ENCODE measurements at regions of chr14 and their contacts with region 1.

Region 1: GRCh38 chr14:102774391-102775153 is 2.7 kb upstream of the TRAF3 start:
- DNase-seq: peak; percentile 25 to 87
- ATAC-seq: peak in 1 of 3 donors; percentile 19
- H3K4me3 ChIP-seq: no peak overlapping the region
- H3K4me3 Mint-ChIP-seq: no peak overlapping the region
- H3K27ac ChIP-seq: peak overlapping the region; percentile 92
- H3K27ac Mint-ChIP-seq: peak overlapping the region; percentile 23 to 78
- H3K4me1 ChIP-seq: peaks cover 29% of the 10 kb centered on the region
- H3K4me1 Mint-ChIP-seq: peaks cover 15 to 27% of the 10 kb centered on the region in 2 donors
- H3K27me3 ChIP-seq: no peaks in the 10 kb centered on the region
- H3K27me3 Mint-ChIP-seq: peaks cover 0 to 2% of the 10 kb centered on the region in 2 donors
- CTCF ChIP-seq: peak; percentile 67

Region 2: GRCh38 chr14:102795060-102795925 is 20.7 kb after region 1 on chr14:
- intact Hi-C with region 1: loop called (anchors 2 kb)
- DNase-seq: peak in 1 of 2 donors; percentile 67
- ATAC-seq: peak; percentile 89 to 95 (median 91)
- H3K4me3 ChIP-seq: no peak overlapping the region
- H3K4me3 Mint-ChIP-seq: no peak overlapping the region
- H3K27ac ChIP-seq: no peak overlapping the region
- H3K27ac Mint-ChIP-seq: peak overlapping the region; percentile 76 to 82
- H3K4me1 ChIP-seq: peaks cover 13% of the 10 kb centered on the region
- H3K4me1 Mint-ChIP-seq: peaks cover 30 to 38% of the 10 kb centered on the region in 2 donors
- H3K27me3 ChIP-seq: no peaks in the 10 kb centered on the region
- H3K27me3 Mint-ChIP-seq: no peaks in the 10 kb centered on the region
- CTCF ChIP-seq: no peak

Region 3: GRCh38 chr14:102819747-102820330 is 45.3 kb after region 1 on chr14:
- intact Hi-C with region 1: loop called (anchors 5 kb)
- DNase-seq: peak in 1 of 2 donors; percentile 37
- ATAC-seq: peak; percentile 12 to 35 (median 14)
- H3K4me3 ChIP-seq: no peak overlapping the region
- H3K4me3 Mint-ChIP-seq: peak overlapping the region; percentile 47
- H3K27ac ChIP-seq: no peak overlapping the region
- H3K27ac Mint-ChIP-seq: peak overlapping the region; percentile 69 to 76
- H3K4me1 ChIP-seq: peaks cover 16% of the 10 kb centered on the region
- H3K4me1 Mint-ChIP-seq: peaks cover 47 to 48% of the 10 kb centered on the region in 2 donors
- H3K27me3 ChIP-seq: no peaks in the 10 kb centered on the region
- H3K27me3 Mint-ChIP-seq: no peaks in the 10 kb centered on the region
- CTCF ChIP-seq: no peak

Region 4: DNA sequence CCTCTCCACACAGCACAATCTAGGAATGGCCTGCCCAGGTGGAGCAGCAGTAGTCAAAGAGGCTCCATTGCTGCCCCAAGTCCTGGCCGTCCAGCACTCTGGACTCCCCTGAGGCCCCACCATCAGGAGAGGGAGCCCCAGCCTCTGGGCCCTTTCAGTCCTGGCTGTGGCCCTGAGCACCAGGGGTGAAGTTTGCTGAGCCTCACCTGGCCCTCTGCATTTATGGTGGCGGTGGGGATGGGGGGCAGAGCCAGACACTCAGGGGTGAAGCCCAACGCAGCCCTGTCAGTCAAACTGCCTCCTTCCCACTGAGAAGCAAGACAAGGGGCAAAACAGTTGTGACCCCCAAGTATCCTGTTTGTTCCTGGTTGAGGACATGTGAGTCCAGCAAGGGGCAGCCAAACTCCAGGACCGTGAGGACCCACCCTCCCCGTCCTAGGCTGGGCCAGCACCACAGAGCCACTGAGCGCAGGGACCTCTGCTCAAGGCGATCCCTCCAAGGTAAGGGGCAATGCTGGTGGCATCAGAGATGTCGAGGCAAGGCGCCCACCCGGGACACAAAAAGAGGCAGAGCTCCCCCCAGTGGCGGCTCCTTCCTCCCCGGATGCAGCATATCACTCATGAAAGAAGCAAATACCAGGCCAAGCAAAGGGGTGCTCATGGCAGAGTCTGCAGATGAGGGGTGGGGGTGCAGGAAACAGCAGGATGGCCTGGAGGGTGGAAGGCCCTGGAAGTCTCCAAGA is 143.1 kb after region 1 on chr14:
- intact Hi-C with region 1: loop called (anchors 10 kb)
- DNase-seq: peak; percentile 38 to 71
- ATAC-seq: peak in 2 of 3 donors; percentile 52 to 61
- H3K4me3 ChIP-seq: no peak overlapping the region
- H3K4me3 Mint-ChIP-seq: no peak overlapping the region
- H3K27ac ChIP-seq: no peak overlapping the region
- H3K27ac Mint-ChIP-seq: no peak overlapping the region
- H3K4me1 ChIP-seq: peaks cover 18% of the 10 kb centered on the region
- H3K4me1 Mint-ChIP-seq: no peaks in the 10 kb centered on the region
- H3K27me3 ChIP-seq: peaks cover 3% of the 10 kb centered on the region
- H3K27me3 Mint-ChIP-seq: no peaks in the 10 kb centered on the region
- CTCF ChIP-seq: peak; percentile 45

Region 5: DNA sequence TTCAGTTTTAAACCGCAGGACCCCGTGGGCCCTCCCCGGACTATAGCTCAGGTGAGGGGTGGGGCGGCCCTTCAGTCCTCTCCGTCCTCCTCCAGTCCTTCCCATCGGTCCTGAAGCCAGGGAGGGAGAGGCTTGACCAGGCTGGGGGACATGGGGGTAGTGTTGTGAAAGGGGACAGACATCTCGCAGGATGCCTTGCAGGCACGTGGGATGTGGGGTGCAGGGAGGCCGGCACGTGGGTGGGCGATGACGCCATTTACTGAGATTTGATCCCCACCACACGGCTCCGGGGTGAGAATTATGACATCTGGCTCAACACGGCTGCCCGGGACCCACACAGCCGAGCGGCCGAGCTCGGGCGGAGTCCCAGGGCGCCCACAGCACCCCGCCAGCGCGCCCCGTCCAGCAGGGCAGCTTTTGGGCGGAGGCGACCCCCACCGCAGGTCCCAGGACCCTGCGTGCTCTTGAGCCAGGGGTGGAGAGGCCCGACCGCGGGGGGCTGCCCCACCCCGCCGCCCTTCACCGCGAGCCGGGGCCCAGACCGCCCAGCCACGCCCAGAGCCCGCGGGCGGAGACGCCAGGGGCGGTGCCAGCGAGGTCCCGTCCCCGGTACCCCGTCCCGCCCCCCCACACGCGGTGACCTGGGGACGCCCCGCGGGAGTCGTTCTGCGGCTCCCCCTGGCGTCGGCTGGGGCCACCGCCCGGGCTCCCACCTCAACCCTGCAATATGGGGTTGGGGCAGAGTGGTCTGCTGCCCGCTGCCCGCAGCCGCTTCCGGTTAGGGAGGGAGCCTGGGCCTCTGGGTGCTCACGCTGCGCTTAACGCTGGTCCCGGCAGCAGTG is 316.7 kb after region 1 on chr14:
- intact Hi-C with region 1: loop called (anchors 5 kb)
- DNase-seq: peak; percentile 69 to 87
- ATAC-seq: peak; percentile 89 to 90 (median 89)
- H3K4me3 ChIP-seq: peak overlapping the region; percentile 12
- H3K4me3 Mint-ChIP-seq: peak overlapping the region; percentile 62
- H3K27ac ChIP-seq: no peak overlapping the region
- H3K27ac Mint-ChIP-seq: peak overlapping the region; percentile 26 to 72
- H3K4me1 ChIP-seq: peaks cover 19% of the 10 kb centered on the region
- H3K4me1 Mint-ChIP-seq: peaks cover 0 to 5% of the 10 kb centered on the region in 2 donors
- H3K27me3 ChIP-seq: peaks cover 6% of the 10 kb centered on the region
- H3K27me3 Mint-ChIP-seq: no peaks in the 10 kb centered on the region
- CTCF ChIP-seq: peak; percentile 63